Naive thymus-derived CD4-positive, alpha-beta T cell (primary cell): ENCODE measurements at regions of chr10 and their contacts with region 1.

Region 1: GRCh38 chr10:104121520-104122224 is at the start of gene SFR1:
- DNase-seq: peak; percentile 95 to 100 (median 99)
- ATAC-seq: peak; percentile 93
- H3K4me3 ChIP-seq: peak within 1 kb of the TSS; percentile 88
- H3K4me3 Mint-ChIP-seq: peak within 1 kb of the TSS; percentile 88 to 97 (median 96)
- H3K27ac ChIP-seq: peak within 1 kb of the TSS; percentile 99
- H3K27ac Mint-ChIP-seq: peak within 1 kb of the TSS; percentile 95 to 100 (median 99)
- H3K4me1 ChIP-seq: peaks cover 13 to 18% of the 10 kb centered on the region in 2 donors
- H3K4me1 Mint-ChIP-seq: peaks cover 9 to 42% (median 32%) of the 10 kb centered on the region in 7 donors
- H3K27me3 ChIP-seq: no peaks in the 10 kb centered on the region
- H3K27me3 Mint-ChIP-seq: peaks cover 0 to 12% (median 0%) of the 10 kb centered on the region in 5 donors
- total RNA-seq, gene SFR1: 12.0 to 15.3 (median 14.2) TPM

Region 2: GRCh38 chr10:103584216-103585010 is 537.3 kb before region 1 on chr10:
- CTCF ChIA-PET with region 1: no interaction called
- POLR2A ChIA-PET with region 1: interaction called, 3 read pairs
- intact Hi-C with region 1: loop called in 1 of 2 experiments (anchors 1 kb)
- DNase-seq: peak; percentile 46 to 69 (median 58)
- ATAC-seq: peak; percentile 86
- H3K4me3 ChIP-seq: peak overlapping the region; percentile 91
- H3K4me3 Mint-ChIP-seq: peak overlapping the region; percentile 84 to 98 (median 90)
- H3K27ac ChIP-seq: peak overlapping the region; percentile 65
- H3K27ac Mint-ChIP-seq: peak overlapping the region; percentile 84 to 98 (median 96)
- H3K4me1 ChIP-seq: peaks cover 6 to 10% of the 10 kb centered on the region in 2 donors
- H3K4me1 Mint-ChIP-seq: peaks cover 4 to 27% (median 18%) of the 10 kb centered on the region in 7 donors
- H3K27me3 ChIP-seq: no peaks in the 10 kb centered on the region
- H3K27me3 Mint-ChIP-seq: peaks cover 0 to 10% (median 0%) of the 10 kb centered on the region in 5 donors

Region 3: DNA sequence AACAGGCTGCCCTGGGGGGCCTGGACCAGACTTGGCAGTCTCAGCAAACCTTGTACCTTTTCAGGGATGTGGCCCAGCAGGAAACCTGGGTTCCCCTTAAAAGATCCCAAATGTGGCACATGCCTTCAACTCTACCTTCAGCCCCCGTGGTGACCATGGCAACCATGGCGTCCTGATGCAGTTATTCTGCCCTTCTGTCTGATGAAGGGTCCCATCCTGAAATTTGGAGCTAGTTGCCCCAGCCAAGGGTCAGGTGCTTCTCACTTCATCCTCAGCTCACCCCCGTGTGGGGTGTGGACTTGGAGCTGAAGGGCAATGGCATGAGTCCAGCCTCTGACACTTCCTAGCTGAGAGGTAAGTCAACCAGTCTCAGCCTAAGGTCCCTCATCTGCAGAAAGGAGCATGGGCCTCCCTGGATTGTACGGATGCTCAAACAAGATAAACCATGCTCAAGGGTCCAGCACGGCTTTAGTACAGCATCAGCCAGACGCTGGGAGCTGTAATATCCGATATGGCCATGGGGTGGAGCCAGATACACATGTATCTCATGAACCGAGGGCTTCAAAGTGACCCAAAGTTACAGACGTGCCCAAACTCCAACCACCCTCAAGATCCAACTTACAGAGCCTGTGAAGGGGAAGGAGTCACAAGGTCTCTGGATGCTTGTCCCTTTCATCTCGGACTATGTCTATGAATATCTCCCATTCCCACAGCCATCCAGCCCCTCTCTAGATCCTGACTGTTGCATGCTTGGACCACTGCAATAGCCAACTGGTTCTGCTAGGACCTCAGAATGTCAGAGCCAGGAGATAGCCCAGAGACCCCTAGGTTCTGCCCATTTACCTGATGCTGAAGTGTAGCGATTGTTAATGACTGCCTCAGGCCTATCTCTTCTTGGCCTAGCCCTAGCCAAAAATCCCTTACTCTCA is 408.8 kb before region 1 on chr10:
- CTCF ChIA-PET with region 1: interaction called, 3 read pairs
- POLR2A ChIA-PET with region 1: no interaction called
- intact Hi-C with region 1: loop called (anchors 1 to 5 kb)
- DNase-seq: peak; percentile 54 to 80 (median 69)
- ATAC-seq: peak; percentile 91
- H3K4me3 ChIP-seq: no peak overlapping the region
- H3K4me3 Mint-ChIP-seq: no peak overlapping the region
- H3K27ac ChIP-seq: no peak overlapping the region
- H3K27ac Mint-ChIP-seq: peak overlapping the region in 1 of 9 donors; percentile 25
- H3K4me1 ChIP-seq: no peaks in the 10 kb centered on the region
- H3K4me1 Mint-ChIP-seq: peaks cover 0 to 6% (median 2%) of the 10 kb centered on the region in 7 donors
- H3K27me3 ChIP-seq: no peaks in the 10 kb centered on the region
- H3K27me3 Mint-ChIP-seq: peaks cover 0 to 4% (median 0%) of the 10 kb centered on the region in 5 donors

Region 4: GRCh38 chr10:103911021-103911459 is 210.6 kb before region 1 on chr10:
- CTCF ChIA-PET with region 1: no interaction called
- POLR2A ChIA-PET with region 1: interaction called, 14 read pairs
- intact Hi-C with region 1: loop called (anchors 1 to 2 kb)
- DNase-seq: peak in 8 of 9 donors; percentile 44 to 89 (median 83)
- ATAC-seq: peak; percentile 84
- H3K4me3 ChIP-seq: peak overlapping the region; percentile 55
- H3K4me3 Mint-ChIP-seq: peak overlapping the region; percentile 74 to 87 (median 84)
- H3K27ac ChIP-seq: peak overlapping the region; percentile 78
- H3K27ac Mint-ChIP-seq: peak overlapping the region; percentile 96 to 99 (median 97)
- H3K4me1 ChIP-seq: peaks cover 80 to 81% of the 10 kb centered on the region in 2 donors
- H3K4me1 Mint-ChIP-seq: peaks cover 47 to 88% (median 76%) of the 10 kb centered on the region in 7 donors
- H3K27me3 ChIP-seq: no peaks in the 10 kb centered on the region
- H3K27me3 Mint-ChIP-seq: no peaks in the 10 kb centered on the region

Region 5: DNA sequence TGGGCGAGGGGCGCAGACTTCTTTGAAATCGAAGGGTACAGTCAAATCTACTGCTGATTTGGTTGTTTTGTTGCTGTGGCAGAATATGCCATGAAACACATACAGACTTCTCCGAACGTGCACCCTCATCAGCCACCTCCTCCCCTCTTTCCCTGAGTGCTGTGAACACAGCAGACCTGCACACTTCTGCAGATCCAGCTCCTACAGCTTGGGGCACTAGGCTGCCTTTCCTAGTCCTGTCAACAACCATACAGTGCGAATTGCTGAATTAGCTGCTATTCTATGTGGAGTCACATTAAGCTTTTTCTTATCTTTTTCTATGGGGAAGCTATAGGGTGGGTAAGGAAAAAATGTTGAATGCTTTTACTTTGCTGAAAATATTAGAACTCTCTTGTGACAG is 93.5 kb before region 1 on chr10:
- CTCF ChIA-PET with region 1: interaction called, 4 read pairs
- POLR2A ChIA-PET with region 1: interaction called, 5 read pairs
- intact Hi-C with region 1: loop called in 1 of 2 experiments (anchors 1 kb)
- DNase-seq: peak in 5 of 9 donors; percentile 11 to 29 (median 15)
- ATAC-seq: peak; percentile 75
- H3K4me3 ChIP-seq: no peak overlapping the region
- H3K4me3 Mint-ChIP-seq: no peak overlapping the region
- H3K27ac ChIP-seq: no peak overlapping the region
- H3K27ac Mint-ChIP-seq: peak overlapping the region in 4 of 9 donors; percentile 59 to 78 (median 69)
- H3K4me1 ChIP-seq: no peaks in the 10 kb centered on the region
- H3K4me1 Mint-ChIP-seq: peaks cover 0 to 6% (median 0%) of the 10 kb centered on the region in 7 donors
- H3K27me3 ChIP-seq: no peaks in the 10 kb centered on the region
- H3K27me3 Mint-ChIP-seq: no peaks in the 10 kb centered on the region

Region 6: GRCh38 chr10:104231784-104232612 is 110.3 kb after region 1 on chr10 and contains the start of gene CFAP43:
- CTCF ChIA-PET with region 1: no interaction called
- POLR2A ChIA-PET with region 1: interaction called, 4 read pairs
- intact Hi-C with region 1: loop called (anchors 1 kb)
- DNase-seq: peak; percentile 99 to 100 (median 99)
- ATAC-seq: peak; percentile 100
- H3K4me3 ChIP-seq: peak within 1 kb of the TSS; percentile 74
- H3K4me3 Mint-ChIP-seq: peak within 1 kb of the TSS; percentile 84 to 95 (median 91)
- H3K27ac ChIP-seq: peak within 1 kb of the TSS; percentile 44
- H3K27ac Mint-ChIP-seq: peak within 1 kb of the TSS; percentile 63 to 95 (median 86)
- H3K4me1 ChIP-seq: peaks cover 0 to 6% of the 10 kb centered on the region in 2 donors
- H3K4me1 Mint-ChIP-seq: peaks cover 6 to 18% (median 13%) of the 10 kb centered on the region in 7 donors
- H3K27me3 ChIP-seq: peaks cover 0 to 7% of the 10 kb centered on the region in 2 donors
- H3K27me3 Mint-ChIP-seq: peaks cover 10 to 58% (median 19%) of the 10 kb centered on the region in 5 donors
- total RNA-seq, gene CFAP43: 0.17 TPM in 1 of 5 experiments, not detected in the others

Region 7: DNA sequence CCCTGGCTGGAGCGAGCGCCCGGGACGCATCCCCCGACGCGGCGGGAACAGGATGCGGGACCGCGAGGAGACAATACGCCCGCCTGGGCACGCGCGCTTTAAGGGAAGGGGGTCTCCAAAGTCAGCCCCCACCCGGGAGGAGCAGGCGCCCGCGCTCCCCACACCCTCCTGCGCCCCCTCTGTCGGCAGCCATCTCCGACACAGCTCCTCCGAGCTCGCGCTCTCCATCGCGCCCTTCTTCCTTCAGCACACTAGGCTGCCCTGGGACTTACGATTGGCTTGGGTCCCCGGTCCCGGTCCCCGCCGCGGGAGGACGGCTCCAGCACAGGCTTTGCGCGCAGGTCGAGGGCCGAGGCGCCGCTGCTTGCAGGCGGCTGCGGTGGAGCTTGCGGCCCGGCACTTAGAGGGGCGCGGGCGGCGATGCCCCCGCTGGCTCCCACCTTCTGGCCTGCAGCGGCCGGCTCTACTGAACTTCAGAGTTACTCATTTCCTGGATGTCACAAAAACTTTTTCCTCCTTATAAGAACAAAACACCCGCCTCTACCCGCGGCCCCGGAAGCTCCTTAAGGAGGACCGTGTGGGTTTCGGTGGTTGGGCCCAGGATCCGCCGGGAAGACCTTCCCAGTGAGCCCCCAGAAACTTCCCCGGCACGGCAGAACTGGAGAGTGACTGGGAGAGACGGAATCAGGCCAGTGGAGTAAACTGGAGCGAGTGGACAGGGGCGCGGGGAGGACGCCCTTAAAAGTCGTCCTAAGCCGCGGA is 216.5 kb after region 1 on chr10 and contains the start of gene ITPRIP:
- CTCF ChIA-PET with region 1: no interaction called
- POLR2A ChIA-PET with region 1: no interaction called
- intact Hi-C with region 1: loop called in 1 of 2 experiments (anchors 5 kb)
- DNase-seq: peak; percentile 60 to 89 (median 88)
- ATAC-seq: peak; percentile 86
- H3K4me3 ChIP-seq: peak within 1 kb of the TSS; percentile 85
- H3K4me3 Mint-ChIP-seq: peak within 1 kb of the TSS; percentile 88 to 100 (median 98)
- H3K27ac ChIP-seq: peak within 1 kb of the TSS; percentile 94
- H3K27ac Mint-ChIP-seq: peak within 1 kb of the TSS; percentile 87 to 100 (median 99)
- H3K4me1 ChIP-seq: peaks cover 22 to 34% of the 10 kb centered on the region in 2 donors
- H3K4me1 Mint-ChIP-seq: peaks cover 34 to 58% (median 49%) of the 10 kb centered on the region in 7 donors
- H3K27me3 ChIP-seq: no peaks in the 10 kb centered on the region
- H3K27me3 Mint-ChIP-seq: peaks cover 0 to 10% (median 0%) of the 10 kb centered on the region in 5 donors
- total RNA-seq, gene ITPRIP: 20.0 to 129 (median 27.8) TPM